Spleen (tissue), 13 donors: ENCODE measurements at regions of chr15 and their contacts with region 1.

Region 1: DNA sequence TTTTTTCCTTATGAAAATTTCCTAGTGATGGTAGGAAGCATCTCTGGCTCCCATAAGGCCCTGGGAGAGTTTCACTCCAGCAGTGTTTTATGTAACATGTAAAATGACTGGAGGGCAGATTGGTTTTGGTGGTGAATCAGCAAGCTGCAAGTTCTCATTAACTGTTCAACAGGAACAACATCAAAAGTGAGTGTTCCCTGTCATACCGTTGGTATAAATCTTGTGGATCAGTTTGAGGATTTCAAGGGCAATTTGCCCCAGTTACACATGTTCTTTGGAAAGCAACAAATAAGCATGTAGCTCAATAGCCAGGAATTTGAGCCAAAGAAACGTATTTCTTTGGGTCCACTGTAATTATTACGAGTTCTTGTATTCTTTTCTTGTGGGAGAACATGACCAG is 345.7 kb downstream of the SV2B start:
- DNase-seq: no peak
- H3K4me3 ChIP-seq: no peak overlapping the region
- H3K27ac ChIP-seq: no peak overlapping the region
- H3K4me1 ChIP-seq: no peaks in the 10 kb centered on the region
- H3K27me3 ChIP-seq: peaks cover 0 to 4% (median 0%) of the 10 kb centered on the region in 7 donors
- CTCF ChIP-seq: no peak
- POLR2A ChIP-seq: no peak

Region 2: GRCh38 chr15:91278791-91279404 is 166.9 kb before region 1 on chr15:
- intact Hi-C with region 1: no loop called
- DNase-seq: no peak
- H3K4me3 ChIP-seq: no peak overlapping the region
- H3K27ac ChIP-seq: no peak overlapping the region
- H3K4me1 ChIP-seq: no peaks in the 10 kb centered on the region
- H3K27me3 ChIP-seq: peaks cover 0 to 10% (median 0%) of the 10 kb centered on the region in 7 donors
- CTCF ChIP-seq: no peak
- POLR2A ChIP-seq: no peak

Region 3: DNA sequence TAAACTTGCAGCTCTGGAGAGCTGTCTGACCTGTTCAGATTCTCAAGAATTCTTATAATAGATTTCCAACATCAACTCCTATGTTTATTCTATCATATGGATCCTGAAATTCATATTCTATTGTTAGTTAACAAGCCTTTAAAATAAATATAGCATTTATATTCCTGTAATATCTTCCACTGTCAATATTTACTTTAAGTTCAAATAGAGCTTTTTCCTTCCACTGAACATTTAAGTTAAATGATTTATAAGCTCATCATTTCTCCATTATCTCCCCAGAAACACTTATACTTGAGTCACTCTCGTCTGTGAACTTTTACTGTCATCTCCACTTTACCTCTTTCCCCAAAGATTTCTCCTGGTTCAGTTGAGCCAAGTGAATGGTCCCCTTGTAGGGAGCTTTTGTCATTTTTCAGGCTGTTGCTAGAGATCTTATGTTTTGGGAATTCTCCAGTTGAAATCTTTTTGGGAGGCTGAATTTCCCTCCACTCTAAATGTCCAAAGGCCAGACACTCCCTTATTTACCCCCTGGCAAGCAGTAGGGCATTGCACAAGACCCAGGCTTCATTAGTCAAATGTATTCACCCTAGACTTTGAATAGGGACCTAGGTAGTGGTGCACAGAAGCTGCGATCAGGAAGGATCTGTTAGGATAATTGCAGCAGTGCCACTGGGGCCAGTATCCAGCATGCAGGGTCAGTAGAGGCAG is 51.0 kb after region 1 on chr15:
- intact Hi-C with region 1: loop called (anchors 5 kb)
- DNase-seq: no peak
- H3K4me3 ChIP-seq: no peak overlapping the region
- H3K27ac ChIP-seq: no peak overlapping the region
- H3K4me1 ChIP-seq: no peaks in the 10 kb centered on the region
- H3K27me3 ChIP-seq: peaks cover 0 to 3% (median 0%) of the 10 kb centered on the region in 7 donors
- CTCF ChIP-seq: no peak
- POLR2A ChIP-seq: no peak

Region 4: DNA sequence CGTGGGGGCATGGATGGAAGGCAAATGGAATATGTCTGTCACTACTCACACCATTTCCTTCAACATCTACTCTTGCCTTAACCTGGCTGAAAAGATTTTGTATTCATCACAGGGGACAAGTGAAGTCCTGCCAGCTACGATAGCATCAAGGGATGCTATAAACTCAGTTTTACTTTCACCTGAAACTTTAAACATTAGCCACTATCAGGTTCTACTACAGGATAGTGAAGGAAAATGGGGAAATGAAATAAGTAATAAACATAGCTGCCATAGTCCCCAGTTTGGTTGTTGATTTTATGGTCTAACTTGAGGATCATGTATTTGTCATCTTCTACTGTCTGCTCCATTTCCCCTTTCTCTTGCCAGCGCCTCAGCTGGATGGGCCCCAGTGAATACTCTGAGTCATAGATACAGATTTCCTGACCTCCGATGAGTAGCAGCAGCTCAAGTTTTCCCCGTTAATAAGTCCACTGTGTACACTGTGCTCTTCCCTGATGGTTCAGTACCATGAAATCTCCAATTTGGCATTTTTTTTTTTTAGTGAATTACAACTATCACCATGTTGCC is 69.5 kb after region 1 on chr15:
- intact Hi-C with region 1: no loop called
- DNase-seq: no peak
- H3K4me3 ChIP-seq: no peak overlapping the region
- H3K27ac ChIP-seq: no peak overlapping the region
- H3K4me1 ChIP-seq: no peaks in the 10 kb centered on the region
- H3K27me3 ChIP-seq: peaks cover 0 to 10% (median 0%) of the 10 kb centered on the region in 7 donors
- CTCF ChIP-seq: no peak
- POLR2A ChIP-seq: no peak

Region 5: DNA sequence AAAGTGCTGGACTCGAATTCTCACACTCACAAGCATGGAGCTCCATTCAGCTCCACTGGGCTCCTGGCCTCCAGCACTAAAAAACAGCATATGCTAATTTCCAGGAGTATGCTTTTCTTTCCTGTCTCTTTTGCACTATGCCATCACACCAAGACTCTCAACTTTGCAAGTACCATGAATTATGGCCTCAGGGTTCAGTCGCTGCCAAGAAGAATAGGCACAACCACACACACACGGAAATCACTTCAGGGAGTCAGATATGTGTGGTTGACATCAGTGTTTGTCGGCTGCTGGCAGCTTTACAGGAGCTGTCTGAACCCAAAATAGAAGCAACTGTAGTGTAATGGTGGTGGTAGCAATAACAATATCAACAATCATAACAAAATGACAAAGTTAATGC is 102.8 kb after region 1 on chr15:
- intact Hi-C with region 1: no loop called
- DNase-seq: no peak
- H3K4me3 ChIP-seq: no peak overlapping the region
- H3K27ac ChIP-seq: no peak overlapping the region
- H3K4me1 ChIP-seq: no peaks in the 10 kb centered on the region
- H3K27me3 ChIP-seq: peaks cover 0 to 9% (median 0%) of the 10 kb centered on the region in 7 donors
- CTCF ChIP-seq: no peak
- POLR2A ChIP-seq: no peak

Region 6: GRCh38 chr15:91559066-91559465 is 113.3 kb after region 1 on chr15:
- intact Hi-C with region 1: no loop called
- DNase-seq: no peak
- H3K4me3 ChIP-seq: no peak overlapping the region
- H3K27ac ChIP-seq: no peak overlapping the region
- H3K4me1 ChIP-seq: no peaks in the 10 kb centered on the region
- H3K27me3 ChIP-seq: peaks cover 0 to 23% (median 0%) of the 10 kb centered on the region in 7 donors
- CTCF ChIP-seq: no peak
- POLR2A ChIP-seq: no peak